Activated CD8-positive, alpha-beta memory T cell treated with anti-CD3 and anti-CD28 coated beads, Interleukin-2, amount 10 ng/mL, durations not matched to agents 7 days and 5 days (primary cell): ENCODE measurements at regions of chr2 and their contacts with region 1.

Region 1: GRCh38 chr2:20661067-20661980 is 5.6 kb upstream of the GDF7 start:
- DNase-seq: peak; percentile 75
- ATAC-seq: peak; percentile 73
- H3K4me3 Mint-ChIP-seq: no peak overlapping the region
- H3K27ac Mint-ChIP-seq: no peak overlapping the region
- H3K4me1 Mint-ChIP-seq: peaks cover 10% of the 10 kb centered on the region
- H3K27me3 Mint-ChIP-seq: peaks cover 80% of the 10 kb centered on the region

Region 2: DNA sequence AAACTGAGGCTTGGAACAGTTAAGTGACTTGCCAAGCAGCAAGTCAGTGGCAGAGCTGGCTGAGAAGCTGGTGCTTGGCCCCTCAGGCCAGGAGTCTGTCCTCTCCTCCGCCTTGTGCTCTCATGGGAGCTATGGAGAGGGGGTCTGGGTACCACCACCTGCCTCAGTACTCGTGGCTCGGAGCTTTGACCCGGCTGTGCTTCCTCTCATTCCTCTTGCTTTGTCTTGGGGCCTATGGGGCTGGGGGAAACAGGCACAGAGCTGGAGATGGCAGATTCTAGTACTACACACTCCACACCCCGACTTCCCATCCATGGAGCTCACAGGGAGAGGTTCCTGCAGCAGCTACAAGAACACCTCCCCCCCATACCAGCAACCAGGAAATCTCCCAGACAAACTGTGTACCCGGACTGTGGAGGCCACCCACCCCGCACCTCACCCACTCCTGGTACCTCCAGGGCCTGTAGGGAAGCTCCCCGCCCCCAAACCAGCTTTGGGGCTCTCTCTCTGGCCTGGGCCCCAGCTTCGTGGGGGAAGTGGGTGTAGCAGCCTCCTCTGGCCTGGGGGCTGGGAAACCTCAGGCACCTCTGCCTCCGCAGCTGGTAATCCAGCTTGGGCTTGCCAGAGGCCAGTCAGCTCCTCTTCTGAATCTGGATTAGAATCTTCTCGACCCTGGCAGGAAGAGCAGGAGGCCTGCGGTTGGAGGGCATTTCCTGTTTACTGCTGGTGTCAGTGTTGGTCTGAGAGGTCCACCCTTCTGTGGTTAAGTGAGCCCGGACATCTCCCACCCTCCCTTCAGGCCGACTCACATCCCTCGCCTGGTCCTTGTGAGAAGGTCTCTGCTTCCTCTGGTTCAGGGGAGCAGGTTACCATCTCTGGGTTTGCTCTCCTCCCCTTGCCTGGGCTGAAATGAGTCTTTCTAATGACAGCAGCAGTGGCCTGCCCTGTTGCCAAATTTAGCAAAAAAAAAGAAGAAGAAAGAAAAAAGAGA is 236.7 kb before region 1 on chr2:
- CTCF ChIA-PET with region 1: interaction called, 10 read pairs
- DNase-seq: peak; percentile 77
- ATAC-seq: peak; percentile 71
- H3K4me3 Mint-ChIP-seq: no peak overlapping the region
- H3K27ac Mint-ChIP-seq: peak overlapping the region; percentile 82
- H3K4me1 Mint-ChIP-seq: peaks cover 29% of the 10 kb centered on the region
- H3K27me3 Mint-ChIP-seq: peaks cover 6% of the 10 kb centered on the region

Region 3: GRCh38 chr2:20650880-20651730 is 10.2 kb before region 1 on chr2 and contains the start of gene HS1BP3:
- CTCF ChIA-PET with region 1: interaction called, 44 read pairs
- DNase-seq: peak; percentile 88
- ATAC-seq: peak; percentile 96
- H3K4me3 Mint-ChIP-seq: peak within 1 kb of the TSS; percentile 83
- H3K27ac Mint-ChIP-seq: peak within 1 kb of the TSS; percentile 87
- H3K4me1 Mint-ChIP-seq: peaks cover 19% of the 10 kb centered on the region
- H3K27me3 Mint-ChIP-seq: peaks cover 12% of the 10 kb centered on the region
- total RNA-seq, gene HS1BP3: 12.8 to 12.9 TPM

Region 4: GRCh38 chr2:20675701-20676352 is 14.5 kb after region 1 on chr2:
- CTCF ChIA-PET with region 1: interaction called, 26 read pairs
- DNase-seq: no peak
- ATAC-seq: peak; percentile 36
- H3K4me3 Mint-ChIP-seq: no peak overlapping the region
- H3K27ac Mint-ChIP-seq: no peak overlapping the region
- H3K4me1 Mint-ChIP-seq: peaks cover 5% of the 10 kb centered on the region
- H3K27me3 Mint-ChIP-seq: peaks cover 35% of the 10 kb centered on the region

Region 5: DNA sequence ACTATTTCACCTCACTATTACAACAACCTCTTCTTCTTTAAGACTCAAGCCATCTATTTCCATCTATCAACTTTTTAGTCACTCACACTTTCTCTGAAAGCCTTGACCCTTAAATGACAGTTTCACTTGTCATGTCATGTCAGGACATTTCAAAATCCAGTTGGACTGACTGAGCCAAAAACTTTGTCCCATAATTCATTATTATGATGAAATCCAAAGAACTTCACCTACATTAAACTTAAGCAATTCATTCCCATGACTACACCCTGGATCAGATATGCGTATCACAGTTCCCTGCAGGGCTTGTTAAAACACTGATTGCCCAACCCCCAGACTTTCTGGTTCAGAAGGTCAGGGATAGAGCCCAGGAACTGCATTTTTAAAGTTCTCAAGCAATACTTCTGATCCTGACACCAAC is 135.1 kb after region 1 on chr2:
- CTCF ChIA-PET with region 1: no interaction called
- DNase-seq: no peak
- ATAC-seq: no peak
- H3K4me3 Mint-ChIP-seq: no peak overlapping the region
- H3K27ac Mint-ChIP-seq: no peak overlapping the region
- H3K4me1 Mint-ChIP-seq: peaks cover 10% of the 10 kb centered on the region
- H3K27me3 Mint-ChIP-seq: no peaks in the 10 kb centered on the region

Region 6: GRCh38 chr2:20822535-20823490 is 161.5 kb after region 1 on chr2 and contains the start of gene LDAH:
- CTCF ChIA-PET with region 1: interaction called, 21 read pairs
- DNase-seq: peak; percentile 91
- ATAC-seq: peak; percentile 84
- H3K4me3 Mint-ChIP-seq: peak within 1 kb of the TSS; percentile 97
- H3K27ac Mint-ChIP-seq: peak within 1 kb of the TSS; percentile 98
- H3K4me1 Mint-ChIP-seq: peaks cover 30% of the 10 kb centered on the region
- H3K27me3 Mint-ChIP-seq: no peaks in the 10 kb centered on the region
- total RNA-seq, gene LDAH: 21.3 to 23.7 TPM

Region 7: DNA sequence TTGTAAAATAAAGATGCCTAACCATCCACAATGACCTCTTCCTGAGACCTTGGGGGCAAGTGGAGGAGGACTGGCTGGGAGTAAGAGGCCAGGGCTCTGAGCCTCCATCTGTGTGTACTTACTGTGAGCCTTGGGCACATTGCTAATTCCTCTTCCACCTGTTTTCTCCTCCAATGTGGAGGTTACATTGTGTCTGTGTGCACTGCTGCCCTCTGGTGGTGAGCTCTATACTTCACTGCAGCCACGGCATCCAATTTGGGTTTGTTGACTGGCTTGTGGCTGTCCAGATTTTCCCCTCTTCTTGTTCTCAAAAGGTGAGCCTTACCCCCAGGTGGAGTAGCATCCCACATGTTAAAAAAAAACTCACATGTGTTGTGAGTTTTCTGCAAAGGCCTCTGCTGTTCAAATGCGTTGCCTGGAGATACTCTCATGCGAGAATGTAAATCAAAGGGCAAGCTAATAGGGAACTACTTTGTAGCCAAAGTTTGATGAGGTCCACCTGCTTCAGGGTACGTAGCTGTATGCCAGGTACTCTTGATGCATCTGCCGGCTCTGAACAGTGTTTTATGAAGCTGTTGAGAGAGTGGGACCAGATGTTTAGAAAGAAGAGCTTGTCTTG is 301.7 kb after region 1 on chr2:
- CTCF ChIA-PET with region 1: interaction called, 154 read pairs
- DNase-seq: peak; percentile 73
- ATAC-seq: peak; percentile 47
- H3K4me3 Mint-ChIP-seq: no peak overlapping the region
- H3K27ac Mint-ChIP-seq: no peak overlapping the region
- H3K4me1 Mint-ChIP-seq: no peaks in the 10 kb centered on the region
- H3K27me3 Mint-ChIP-seq: peaks cover 23% of the 10 kb centered on the region